ENCODE measurements at regions of chr1 and their contacts with region 1.

Region 1: DNA sequence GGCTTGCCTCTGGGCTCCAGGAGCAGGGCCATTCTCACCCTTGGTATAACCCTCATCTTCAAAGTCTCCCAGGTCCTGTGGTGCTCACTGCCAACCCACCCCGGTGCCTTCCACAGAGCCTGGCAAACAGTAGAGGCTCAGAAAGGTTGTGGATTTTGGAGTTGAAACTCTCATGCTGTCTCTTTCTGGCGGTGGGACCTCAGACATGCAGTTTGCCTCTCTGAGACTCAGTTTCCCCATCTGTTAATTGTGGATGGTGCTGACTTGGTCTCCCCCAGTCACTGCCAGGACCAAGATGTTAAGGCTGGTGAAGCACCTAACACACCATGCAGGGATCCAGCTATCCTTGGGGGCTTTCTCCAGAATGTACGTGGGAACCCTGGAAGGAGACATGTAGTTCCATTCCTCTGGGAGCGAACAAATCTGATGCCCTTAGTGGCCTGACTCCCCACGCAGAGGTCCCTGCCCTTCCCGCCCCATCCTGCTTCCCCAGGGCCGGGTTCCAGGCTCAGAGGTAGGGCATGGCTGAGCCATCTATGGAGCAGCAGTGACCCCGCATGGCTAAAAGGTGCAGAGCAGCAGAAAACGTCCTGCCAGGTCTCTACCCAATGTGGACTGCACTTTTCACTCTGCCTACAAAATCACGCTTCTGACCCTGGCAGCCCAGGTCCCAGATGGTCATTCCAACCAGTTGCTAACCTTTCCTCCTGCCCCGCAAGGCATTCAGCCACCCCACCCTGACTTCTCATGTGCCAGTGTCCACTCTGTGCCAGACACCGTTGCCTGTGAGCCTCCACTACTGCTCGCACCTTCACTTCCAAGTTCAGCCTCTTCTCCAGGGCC is 9.2 kb upstream of the TTC22 start:
- DNase-seq: peak; percentile 43
- ATAC-seq: peak; percentile 93
- H3K4me3 ChIP-seq: no peak overlapping the region
- H3K27ac ChIP-seq: no peak overlapping the region
- H3K4me1 ChIP-seq: peaks cover 7 to 36% of the 10 kb centered on the region in 2 experiments
- H3K27me3 ChIP-seq: no peaks in the 10 kb centered on the region
- CTCF ChIP-seq: peak; percentile 89 to 92 (median 90)
- POLR2A ChIP-seq: no peak
- RAD21 ChIP-seq: peak; percentile 98

Region 2: DNA sequence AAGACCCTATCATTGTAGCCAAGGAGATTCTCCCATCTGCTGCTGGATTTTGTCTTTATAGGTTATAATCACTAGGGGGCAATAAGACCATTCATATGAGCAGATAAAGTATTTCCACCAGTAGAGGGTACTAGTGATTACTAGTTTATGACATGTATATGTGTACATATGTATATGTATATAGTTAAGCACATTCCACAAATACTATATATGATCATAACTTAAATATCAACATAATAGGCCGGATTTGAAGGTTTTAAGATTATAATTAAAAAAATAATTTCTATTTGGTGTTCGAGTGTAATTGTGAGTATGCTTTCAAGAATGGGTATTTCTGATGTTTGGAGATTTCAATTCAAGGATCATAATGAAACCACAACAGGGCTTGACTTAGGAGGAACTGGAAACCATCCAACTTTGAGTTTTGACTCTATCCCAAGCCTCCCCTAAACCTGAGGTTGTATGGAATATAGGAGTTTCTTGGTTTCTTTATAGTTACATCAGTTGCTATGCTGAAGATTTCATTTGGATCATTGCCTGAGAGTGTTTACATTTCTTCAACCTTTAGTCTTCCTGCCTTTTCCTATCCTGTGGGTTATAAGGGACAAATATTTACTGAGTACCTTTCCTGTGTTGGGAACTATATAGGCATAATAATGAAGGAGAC is 740.0 kb before region 1 on chr1:
- CTCF ChIA-PET with region 1: no interaction called
- POLR2A ChIA-PET with region 1: no interaction called
- RAD21 ChIA-PET with region 1: no interaction called
- intact Hi-C with region 1: loop called (anchors 2 kb)
- DNase-seq: peak; percentile 43
- ATAC-seq: peak; percentile 95
- H3K4me3 ChIP-seq: no peak overlapping the region
- H3K27ac ChIP-seq: no peak overlapping the region
- H3K4me1 ChIP-seq: peaks cover 0 to 4% of the 10 kb centered on the region in 2 experiments; a peak in 1 of 4 replicates
- H3K27me3 ChIP-seq: no peaks in the 10 kb centered on the region
- CTCF ChIP-seq: peak; percentile 76 to 100 (median 92)
- POLR2A ChIP-seq: no peak
- RAD21 ChIP-seq: peak; percentile 91

Region 3: DNA sequence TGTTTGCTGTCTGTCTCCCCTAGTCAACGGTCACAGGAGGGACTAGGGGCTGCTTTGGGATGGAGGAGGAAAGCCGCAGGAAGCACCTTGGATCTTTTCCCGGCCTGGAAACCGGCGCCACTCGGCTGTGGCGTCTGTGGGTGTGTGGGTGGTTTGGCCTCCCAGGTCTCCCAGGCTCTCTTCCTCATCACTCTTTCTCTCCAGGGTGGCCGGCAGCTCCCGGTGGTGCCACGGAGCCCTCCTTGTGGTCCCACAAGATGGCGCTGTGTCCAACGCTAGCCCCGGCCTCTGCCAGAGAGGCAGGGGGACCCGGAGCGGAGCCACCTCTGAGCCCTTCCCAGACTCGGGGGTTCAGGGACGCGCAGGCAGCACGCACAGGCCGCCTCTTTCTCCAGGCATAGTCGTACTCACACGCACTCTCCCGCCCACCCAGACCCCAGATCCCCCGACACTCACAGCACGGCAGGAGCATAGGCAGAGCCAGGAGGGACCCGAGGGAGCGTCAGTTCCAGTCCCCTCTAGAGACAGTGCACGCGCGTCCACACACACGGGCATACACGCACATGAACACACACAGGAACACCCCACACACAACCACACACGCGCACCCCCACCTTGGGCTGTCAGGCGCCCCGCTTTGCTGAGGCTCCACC is 688.7 kb before region 1 on chr1:
- CTCF ChIA-PET with region 1: no interaction called
- POLR2A ChIA-PET with region 1: no interaction called
- RAD21 ChIA-PET with region 1: no interaction called
- intact Hi-C with region 1: loop called (anchors 5 kb)
- DNase-seq: peak; percentile 29
- ATAC-seq: peak; percentile 93
- H3K4me3 ChIP-seq: peak overlapping the region; percentile 34 to 46
- H3K27ac ChIP-seq: no peak overlapping the region
- H3K4me1 ChIP-seq: peaks cover 2 to 28% of the 10 kb centered on the region in 2 experiments; a peak in 3 of 4 replicates
- H3K27me3 ChIP-seq: no peaks in the 10 kb centered on the region
- CTCF ChIP-seq: peak; percentile 71 to 83 (median 80)
- POLR2A ChIP-seq: no peak
- RAD21 ChIP-seq: peak; percentile 87

Region 4: DNA sequence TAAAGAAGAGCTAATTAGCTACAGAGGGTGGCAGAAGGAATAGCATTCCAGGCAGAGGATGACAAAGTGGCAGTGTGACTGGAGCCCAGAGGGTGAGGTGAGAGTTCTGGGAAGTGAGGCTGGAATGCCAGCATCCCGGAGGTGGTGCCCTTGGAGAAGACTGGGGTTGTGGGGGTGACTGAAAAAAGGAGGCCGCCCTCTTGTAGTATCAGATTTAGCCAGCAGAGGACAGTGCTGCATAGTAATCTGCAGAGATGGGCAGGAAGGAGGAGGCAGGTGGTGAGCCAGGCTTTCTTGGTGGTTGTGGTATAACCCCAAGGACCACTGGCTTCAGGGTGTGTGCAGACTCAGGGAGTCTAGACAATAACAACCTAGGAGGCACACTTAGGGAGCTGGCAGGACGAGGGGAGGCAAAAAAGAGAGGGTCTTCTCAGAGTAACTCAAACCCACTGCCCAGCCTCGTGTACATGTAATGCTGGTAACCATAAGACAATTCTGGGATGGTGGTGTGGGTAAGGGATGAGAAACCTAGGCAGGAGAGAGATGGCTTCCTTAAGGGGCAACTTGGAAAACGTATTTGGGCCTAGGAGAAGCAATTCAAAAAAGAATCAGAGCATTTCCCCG is 138.2 kb before region 1 on chr1:
- CTCF ChIA-PET with region 1: interaction called, 3 read pairs
- POLR2A ChIA-PET with region 1: no interaction called
- RAD21 ChIA-PET with region 1: no interaction called
- intact Hi-C with region 1: loop called (anchors 1 kb)
- DNase-seq: peak; percentile 35
- ATAC-seq: peak; percentile 96
- H3K4me3 ChIP-seq: no peak overlapping the region
- H3K27ac ChIP-seq: no peak overlapping the region
- H3K4me1 ChIP-seq: no peaks in the 10 kb centered on the region
- H3K27me3 ChIP-seq: no peaks in the 10 kb centered on the region
- CTCF ChIP-seq: peak; percentile 80 to 88 (median 86)
- POLR2A ChIP-seq: no peak
- RAD21 ChIP-seq: peak; percentile 96

Region 5: GRCh38 chr1:54764133-54764921 is 46.0 kb before region 1 on chr1 and contains the start of gene PARS2:
- CTCF ChIA-PET with region 1: no interaction called
- POLR2A ChIA-PET with region 1: no interaction called
- RAD21 ChIA-PET with region 1: no interaction called
- intact Hi-C with region 1: loop called (anchors 5 kb)
- DNase-seq: peak; percentile 99
- ATAC-seq: peak; percentile 93
- H3K4me3 ChIP-seq: peak within 1 kb of the TSS; percentile 97 to 98
- H3K27ac ChIP-seq: peak within 1 kb of the TSS; percentile 52
- H3K4me1 ChIP-seq: peaks cover 5 to 18% of the 10 kb centered on the region in 2 experiments; a peak in 3 of 4 replicates
- H3K27me3 ChIP-seq: no peaks in the 10 kb centered on the region
- CTCF ChIP-seq: no peak
- POLR2A ChIP-seq: peak; percentile 47
- RAD21 ChIP-seq: no peak
- total RNA-seq, gene PARS2: 9.6 TPM

Measured in HCT116 (cell line).